ENCODE measurements at regions of chr12 and their contacts with region 1.

Region 1: GRCh38 chr12:49489720-49490119 is 49.1 kb upstream of the KCNH3 start:
- DNase-seq: no peak
- ATAC-seq: no peak
- H3K4me3 ChIP-seq: no peak overlapping the region
- H3K4me3 Mint-ChIP-seq: no peak overlapping the region
- H3K27ac ChIP-seq: no peak overlapping the region
- H3K27ac Mint-ChIP-seq: no peak overlapping the region
- H3K4me1 ChIP-seq: no peaks in the 10 kb centered on the region
- H3K4me1 Mint-ChIP-seq: no peaks in the 10 kb centered on the region
- H3K27me3 ChIP-seq: no peaks in the 10 kb centered on the region
- H3K27me3 Mint-ChIP-seq: no peaks in the 10 kb centered on the region
- CTCF ChIP-seq: no peak

Region 2: GRCh38 chr12:49253088-49253487 is 236.6 kb before region 1 on chr12:
- CTCF ChIA-PET with region 1: no interaction called
- POLR2A ChIA-PET with region 1: no interaction called
- intact Hi-C with region 1: no loop called
- DNase-seq: no peak
- ATAC-seq: no peak
- H3K4me3 ChIP-seq: no peak overlapping the region
- H3K4me3 Mint-ChIP-seq: no peak overlapping the region
- H3K27ac ChIP-seq: no peak overlapping the region
- H3K27ac Mint-ChIP-seq: no peak overlapping the region
- H3K4me1 ChIP-seq: no peaks in the 10 kb centered on the region
- H3K4me1 Mint-ChIP-seq: no peaks in the 10 kb centered on the region
- H3K27me3 ChIP-seq: no peaks in the 10 kb centered on the region
- H3K27me3 Mint-ChIP-seq: no peaks in the 10 kb centered on the region
- CTCF ChIP-seq: no peak

Region 3: DNA sequence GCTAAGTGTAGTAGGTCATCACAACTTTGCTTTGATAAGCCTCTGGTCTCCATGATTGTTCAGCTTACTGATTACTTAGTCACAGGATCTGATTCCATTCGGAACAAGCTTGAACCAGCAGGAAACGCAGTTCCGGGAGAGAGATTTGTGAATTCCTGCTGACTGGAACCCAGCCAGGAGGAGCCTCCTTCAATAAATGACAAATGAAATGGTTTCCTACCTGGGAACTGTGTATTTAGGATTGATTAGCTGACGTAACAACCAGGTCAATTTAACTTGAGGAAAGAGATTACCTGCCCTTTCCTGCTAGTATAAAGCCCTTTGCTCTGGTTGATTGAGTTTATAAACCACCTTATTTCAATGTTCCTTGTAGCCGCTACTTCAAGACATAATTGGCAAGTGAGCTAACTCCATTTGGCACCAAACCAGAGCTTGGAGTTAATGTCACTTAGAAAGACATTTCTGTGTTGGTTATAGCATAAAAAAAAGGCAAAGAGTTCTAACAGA is 14.0 kb after region 1 on chr12:
- CTCF ChIA-PET with region 1: no interaction called
- POLR2A ChIA-PET with region 1: no interaction called
- intact Hi-C with region 1: no loop called
- DNase-seq: no peak
- ATAC-seq: no peak
- H3K4me3 ChIP-seq: no peak overlapping the region
- H3K4me3 Mint-ChIP-seq: no peak overlapping the region
- H3K27ac ChIP-seq: no peak overlapping the region
- H3K27ac Mint-ChIP-seq: no peak overlapping the region
- H3K4me1 ChIP-seq: peaks cover 3% of the 10 kb centered on the region
- H3K4me1 Mint-ChIP-seq: peaks cover 14% of the 10 kb centered on the region
- H3K27me3 ChIP-seq: no peaks in the 10 kb centered on the region
- H3K27me3 Mint-ChIP-seq: no peaks in the 10 kb centered on the region
- CTCF ChIP-seq: no peak

Region 4: DNA sequence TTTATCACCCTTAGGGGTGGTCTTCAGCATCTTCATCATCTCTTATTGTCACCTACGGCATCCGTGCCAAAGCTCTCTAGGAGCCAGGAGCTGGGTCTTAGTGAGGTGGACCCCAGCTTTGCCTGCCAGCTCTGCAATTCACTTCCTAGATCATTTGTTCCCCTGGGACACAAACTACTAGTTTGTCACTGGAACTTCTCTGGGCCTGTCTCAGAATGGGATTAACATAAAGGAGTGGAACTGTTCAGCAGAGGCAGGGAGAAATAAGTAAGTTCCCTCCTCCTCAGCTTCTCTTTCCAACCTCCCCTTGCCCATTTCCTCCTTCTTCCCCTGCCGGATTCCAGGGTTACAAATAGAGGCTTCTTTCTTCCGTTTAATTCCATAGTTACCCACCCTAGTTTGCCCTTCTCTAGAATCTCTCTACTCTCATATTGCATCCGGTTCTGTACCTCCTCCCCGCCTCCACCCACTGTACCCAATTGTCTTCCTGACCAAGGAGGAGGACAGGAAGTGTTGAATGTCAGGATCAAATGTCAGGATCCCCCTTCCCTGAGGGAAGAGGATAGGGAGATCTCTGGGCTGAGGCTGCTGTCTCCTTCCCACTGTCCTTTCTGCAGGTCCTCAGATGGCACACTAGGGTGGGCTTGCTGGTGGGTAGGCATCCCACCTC is 936.0 kb after region 1 on chr12:
- CTCF ChIA-PET with region 1: no interaction called
- POLR2A ChIA-PET with region 1: no interaction called
- intact Hi-C with region 1: loop called in 1 of 2 experiments (anchors 5 kb)
- DNase-seq: no peak
- ATAC-seq: no peak
- H3K4me3 ChIP-seq: no peak overlapping the region
- H3K4me3 Mint-ChIP-seq: no peak overlapping the region
- H3K27ac ChIP-seq: no peak overlapping the region
- H3K27ac Mint-ChIP-seq: no peak overlapping the region
- H3K4me1 ChIP-seq: no peaks in the 10 kb centered on the region
- H3K4me1 Mint-ChIP-seq: peaks cover 13% of the 10 kb centered on the region
- H3K27me3 ChIP-seq: no peaks in the 10 kb centered on the region
- H3K27me3 Mint-ChIP-seq: no peaks in the 10 kb centered on the region
- CTCF ChIP-seq: no peak